Mammary epithelial cell (primary cell): ENCODE measurements at regions of chr1 and their contacts with region 1.

Region 1: GRCh38 chr1:220300442-220301121 is 28.3 kb upstream of the RAB3GAP2 start:
- DNase-seq: peak; percentile 76
- H3K4me3 ChIP-seq: no peak overlapping the region
- H3K27ac ChIP-seq: peak overlapping the region; percentile 30
- H3K4me1 ChIP-seq: peaks cover 4% of the 10 kb centered on the region
- H3K27me3 ChIP-seq: no peaks in the 10 kb centered on the region
- CTCF ChIP-seq: no peak

Region 2: DNA sequence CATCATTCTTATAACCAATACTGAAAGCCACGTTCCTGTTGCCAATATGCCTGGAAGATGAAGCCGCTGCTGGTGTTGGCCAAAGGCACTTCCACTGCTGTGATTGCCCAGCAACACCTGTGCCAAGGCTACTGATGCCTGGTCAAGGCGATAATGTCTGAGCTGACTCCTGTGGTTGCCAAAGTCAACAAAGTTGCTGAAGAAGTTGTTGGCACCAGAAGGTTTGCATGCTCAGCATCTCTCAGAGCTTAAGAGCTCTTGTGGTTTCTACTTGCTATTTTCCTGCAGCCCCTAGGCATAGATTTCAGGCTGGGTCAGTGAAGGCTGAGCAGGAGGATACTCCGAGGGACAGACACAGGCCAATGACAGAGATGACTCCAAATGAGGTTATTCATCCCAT is 35.1 kb after region 1 on chr1:
- CTCF ChIA-PET with region 1: no interaction called
- dilution Hi-C with region 1: no loop called
- in situ Hi-C with region 1: no loop called
- intact Hi-C with region 1: loop called (anchors 2 kb)
- DNase-seq: peak; percentile 39
- H3K4me3 ChIP-seq: no peak overlapping the region
- H3K27ac ChIP-seq: peak overlapping the region; percentile 53
- H3K4me1 ChIP-seq: peaks cover 26% of the 10 kb centered on the region
- H3K27me3 ChIP-seq: no peaks in the 10 kb centered on the region
- CTCF ChIP-seq: no peak